H1 (cell line): ENCODE measurements at regions of chr20 and their contacts with region 1.

Region 1: GRCh38 chr20:335686-336439 is 10.5 kb downstream of the SOX12 start:
- DNase-seq: no peak
- H3K4me3 ChIP-seq: no peak overlapping the region
- H3K27ac ChIP-seq: no peak overlapping the region
- H3K4me1 ChIP-seq: no peaks in the 10 kb centered on the region
- H3K27me3 ChIP-seq: peaks cover 0 to 4% (median 2%) of the 10 kb centered on the region in 4 experiments; a peak in 1 of 7 replicates
- CTCF ChIP-seq: no peak
- EP300 ChIP-seq: no peak
- POLR2A ChIP-seq: no peak
- RAD21 ChIP-seq: no peak

Region 2: DNA sequence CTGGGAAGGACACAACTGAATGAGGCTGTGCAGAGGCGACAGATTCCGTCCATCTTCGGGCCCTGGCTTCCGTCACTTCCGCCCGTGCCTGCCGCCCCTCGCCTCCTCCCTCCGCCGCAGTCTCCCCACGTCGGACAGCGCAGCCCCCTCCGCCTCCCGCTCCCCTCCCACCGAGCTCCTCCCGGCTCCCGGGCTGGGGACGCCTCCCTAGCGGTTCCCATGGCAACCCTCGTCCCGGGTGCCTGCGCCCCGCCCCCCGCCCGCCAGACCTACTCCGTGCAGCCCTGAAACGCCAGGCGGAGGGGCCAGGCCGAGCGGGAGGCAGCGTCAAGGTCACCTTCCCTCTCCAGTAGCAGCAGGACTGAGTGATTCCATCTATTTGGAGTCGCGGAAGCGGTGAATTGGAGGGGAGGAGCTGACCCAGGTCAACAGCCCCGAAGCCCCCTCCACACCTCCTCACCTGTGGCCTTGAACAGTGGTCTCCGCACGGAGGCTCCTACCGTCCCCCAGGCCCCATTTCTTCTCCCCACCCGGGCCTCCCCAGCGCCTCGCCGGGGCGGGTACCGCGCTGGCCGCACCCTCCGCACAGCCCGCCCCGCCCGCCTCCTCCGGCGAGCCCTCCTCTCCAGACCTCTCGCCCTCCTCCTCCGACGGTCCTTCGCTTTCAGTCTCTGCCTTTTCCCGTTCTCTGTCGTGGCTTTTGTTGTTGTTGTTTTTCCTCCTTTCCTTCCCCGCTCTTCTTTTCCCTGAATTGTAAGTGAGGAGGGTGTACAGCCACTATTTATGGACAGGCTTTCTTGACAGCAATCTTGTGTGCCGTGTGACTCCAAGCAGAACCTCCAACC is 12.0 kb after region 1 on chr20:
- CTCF ChIA-PET with region 1: interaction called, 33 read pairs
- POLR2A ChIA-PET with region 1: interaction called, 24 read pairs
- DNase-seq: peak; percentile 89 to 94
- H3K4me3 ChIP-seq: peak overlapping the region; percentile 63 to 90 (median 66)
- H3K27ac ChIP-seq: peak overlapping the region; percentile 85
- H3K4me1 ChIP-seq: peaks cover 0 to 12% (median 8%) of the 10 kb centered on the region in 4 experiments; a peak in 4 of 7 replicates
- H3K27me3 ChIP-seq: peaks cover 0 to 3% (median 0%) of the 10 kb centered on the region in 4 experiments; a peak in 3 of 7 replicates
- CTCF ChIP-seq: no peak
- EP300 ChIP-seq: peak in 1 of 2 experiments; percentile 65; a peak in 1 of 3 replicates
- POLR2A ChIP-seq: peak; percentile 32 to 76
- RAD21 ChIP-seq: no peak